ENCODE measurements at regions of chr4 and their contacts with region 1.

Region 1: GRCh38 chr4:84920617-84921016 is 45.9 kb downstream of the WDFY3 start:
- DNase-seq: no peak

Region 2: DNA sequence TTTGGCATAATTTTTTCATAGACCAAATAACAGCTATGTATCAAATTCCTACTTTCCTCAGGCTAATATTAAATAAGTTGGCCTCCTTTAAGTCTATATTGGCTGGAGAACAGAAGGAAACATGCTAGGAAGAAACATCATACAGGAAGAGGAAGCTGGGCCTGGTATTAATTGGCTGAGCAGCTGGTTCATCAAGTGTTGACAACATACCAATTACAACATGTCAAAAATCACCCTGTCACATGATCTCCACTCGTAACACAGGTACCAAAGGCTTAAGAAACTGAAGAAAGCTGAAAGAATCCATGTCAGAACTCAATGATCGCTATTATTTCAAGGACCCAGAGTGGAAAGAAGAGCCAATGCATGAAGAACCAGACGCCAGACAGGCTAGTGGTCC is 35.4 kb after region 1 on chr4:
- intact Hi-C with region 1: loop called (anchors 5 kb)
- DNase-seq: no peak